Head of caudate nucleus (tissue), 42 donors: ENCODE measurements at regions of chr17 and their contacts with region 1.

Region 1: GRCh38 chr17:29807520-29808351 is 122.3 kb downstream of the SSH2 start:
- DNase-seq: peak in 41 of 42 donors; percentile 12 to 93 (median 78)

Region 2: DNA sequence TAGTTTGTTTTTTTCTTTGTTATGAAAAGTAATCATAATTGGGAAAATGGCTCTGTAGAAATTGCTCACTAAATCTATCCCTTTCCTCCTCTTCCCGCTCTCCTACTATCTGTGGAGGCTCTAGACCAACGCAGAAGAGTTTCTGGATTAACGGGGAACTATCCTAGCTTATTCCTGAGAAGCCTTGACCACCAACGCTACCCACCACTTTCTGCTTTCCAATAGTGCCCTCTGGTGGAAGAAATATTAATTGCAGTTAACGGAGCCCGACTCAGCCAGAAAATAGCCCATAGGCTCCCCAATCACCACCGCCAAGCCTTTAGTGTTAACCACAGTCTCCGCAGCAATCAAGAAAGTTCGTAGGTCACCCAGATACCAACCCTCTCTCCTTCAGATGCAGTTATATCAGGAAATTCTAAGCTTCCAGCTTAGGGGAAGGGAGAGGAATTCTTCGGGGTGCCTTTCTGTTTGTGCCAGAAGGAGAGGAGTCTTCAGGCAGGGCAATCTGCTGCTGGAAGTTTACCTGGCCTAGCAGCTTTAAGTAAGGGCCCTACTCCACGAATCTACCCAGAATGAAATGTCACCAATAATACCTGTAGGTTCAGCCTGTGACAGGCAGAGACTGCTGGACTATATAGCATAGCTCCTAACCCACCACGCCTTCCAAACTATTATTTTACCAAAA is 285.9 kb after region 1 on chr17:
- intact Hi-C with region 1: loop called (anchors 10 kb)
- DNase-seq: peak in 32 of 42 donors; percentile 7 to 81 (median 47)